RWPE1 (cell line): ENCODE measurements at regions of chr11 and their contacts with region 1.

Region 1: GRCh38 chr11:72471005-72471898 is 36.9 kb upstream of the CLPB start:
- DNase-seq: peak; percentile 63
- H3K27ac ChIP-seq: no peak overlapping the region
- CTCF ChIP-seq: peak; percentile 88

Region 2: GRCh38 chr11:72369743-72370142 is 101.5 kb before region 1 on chr11:
- CTCF ChIA-PET with region 1: no interaction called
- POLR2A ChIA-PET with region 1: no interaction called
- DNase-seq: no peak
- H3K27ac ChIP-seq: no peak overlapping the region
- CTCF ChIP-seq: no peak

Region 3: DNA sequence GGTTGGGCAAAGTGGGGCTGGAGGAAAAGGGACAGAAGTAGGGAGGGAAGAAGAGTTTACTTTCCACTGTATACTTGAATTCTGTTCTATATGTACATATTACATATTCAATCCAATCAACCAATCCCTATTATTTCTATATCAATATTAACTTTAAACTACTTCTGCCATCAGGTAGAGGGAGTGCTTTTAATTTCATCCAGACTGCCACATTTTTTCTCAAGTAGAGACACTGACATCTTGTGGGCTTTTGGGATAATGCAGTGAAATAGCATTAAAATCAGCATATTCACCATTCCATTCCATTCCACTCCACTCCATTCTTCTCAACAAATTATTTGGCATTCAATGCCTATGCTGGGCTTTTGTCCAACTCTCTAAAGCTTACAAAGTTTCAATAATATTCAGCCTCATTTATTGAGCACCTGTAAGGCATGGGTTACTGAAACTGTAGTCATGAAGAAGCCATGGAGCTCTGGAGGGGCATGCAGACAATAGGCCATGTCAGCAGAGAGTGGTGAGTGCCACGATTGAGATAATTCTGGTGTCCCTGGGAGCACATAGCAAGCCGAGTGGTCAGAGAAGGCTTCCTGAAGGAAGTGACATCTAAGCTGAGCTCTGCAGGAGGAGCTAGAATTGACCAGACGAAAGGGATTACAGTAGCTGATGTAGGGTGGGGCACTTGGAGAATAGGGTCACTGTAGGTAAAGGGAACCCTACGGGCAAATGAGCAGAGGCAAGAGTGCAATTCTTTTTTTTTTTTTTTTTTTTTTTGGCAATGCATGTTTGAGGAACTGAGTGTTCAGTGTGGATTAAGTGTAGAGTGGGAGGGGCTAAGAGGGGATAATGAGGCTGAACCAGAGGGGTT is 24.1 kb before region 1 on chr11:
- CTCF ChIA-PET with region 1: interaction called, 10 read pairs
- POLR2A ChIA-PET with region 1: no interaction called
- DNase-seq: peak; percentile 79
- H3K27ac ChIP-seq: no peak overlapping the region
- CTCF ChIP-seq: peak; percentile 86

Region 4: DNA sequence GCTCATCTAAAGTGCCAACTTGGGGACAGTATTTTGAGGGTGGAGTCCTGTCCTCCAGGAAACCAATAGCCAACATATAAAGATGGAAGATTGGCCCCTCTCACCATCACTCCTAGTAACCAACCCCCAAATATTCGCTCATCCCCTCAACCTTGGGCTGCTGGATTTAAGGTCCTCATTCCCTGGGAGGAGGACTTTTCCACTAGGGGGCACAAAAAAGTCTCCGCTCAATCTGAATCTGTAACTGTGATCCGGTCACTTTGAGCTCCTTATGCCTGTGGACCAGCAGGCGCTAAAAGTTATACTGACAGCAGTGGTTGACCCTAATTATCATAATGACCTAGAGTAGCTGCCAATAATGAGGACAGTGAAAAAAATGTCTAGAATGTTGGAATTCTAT is 16.5 kb before region 1 on chr11:
- CTCF ChIA-PET with region 1: interaction called, 31 read pairs
- POLR2A ChIA-PET with region 1: no interaction called
- DNase-seq: no peak
- H3K27ac ChIP-seq: no peak overlapping the region
- CTCF ChIP-seq: no peak

Region 5: GRCh38 chr11:72460091-72460647 is 11.1 kb before region 1 on chr11:
- CTCF ChIA-PET with region 1: interaction called, 31 read pairs
- POLR2A ChIA-PET with region 1: no interaction called
- DNase-seq: no peak
- H3K27ac ChIP-seq: no peak overlapping the region
- CTCF ChIP-seq: no peak

Region 6: GRCh38 chr11:72573072-72573854 is 102.0 kb after region 1 on chr11:
- CTCF ChIA-PET with region 1: interaction called, 15 read pairs
- POLR2A ChIA-PET with region 1: no interaction called
- DNase-seq: peak; percentile 76
- H3K27ac ChIP-seq: no peak overlapping the region
- CTCF ChIP-seq: peak; percentile 63